ENCODE measurements at regions of chr4 and their contacts with region 1.

Region 1: GRCh38 chr4:185591679-185592141 is 56.4 kb upstream of the PDLIM3 start:
- DNase-seq: no peak
- ATAC-seq: no peak

Region 2: GRCh38 chr4:185033950-185034349 is 557.8 kb before region 1 on chr4:
- intact Hi-C with region 1: no loop called
- DNase-seq: no peak
- ATAC-seq: no peak

Region 3: DNA sequence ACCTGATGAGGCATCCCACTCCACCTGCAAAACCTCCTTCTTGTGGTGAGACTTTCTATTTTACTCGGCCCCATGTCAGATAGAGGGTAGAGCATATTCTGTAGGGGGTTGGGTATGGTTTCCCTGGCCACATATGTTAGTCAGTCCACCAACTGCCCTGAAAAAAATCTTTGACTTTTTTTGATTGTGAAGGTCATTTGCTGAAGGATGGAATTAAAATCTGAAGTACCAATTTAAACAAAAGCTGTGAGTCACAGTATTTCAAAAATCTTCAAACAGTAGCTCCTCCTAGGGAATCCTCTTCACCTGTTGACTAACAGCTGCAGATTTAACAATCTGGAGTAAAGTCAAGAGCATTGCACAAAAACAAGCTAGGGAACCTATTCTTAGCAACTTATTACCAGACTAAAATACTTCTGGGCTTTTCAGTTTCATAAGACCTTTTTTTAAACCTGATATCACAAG is 112.2 kb before region 1 on chr4:
- intact Hi-C with region 1: loop called in 1 of 2 experiments (anchors 5 kb)
- DNase-seq: no peak
- ATAC-seq: no peak

Measured in left colon (tissue), 2 donors.